ENCODE measurements at regions of chr9 and their contacts with region 1.

Region 1: DNA sequence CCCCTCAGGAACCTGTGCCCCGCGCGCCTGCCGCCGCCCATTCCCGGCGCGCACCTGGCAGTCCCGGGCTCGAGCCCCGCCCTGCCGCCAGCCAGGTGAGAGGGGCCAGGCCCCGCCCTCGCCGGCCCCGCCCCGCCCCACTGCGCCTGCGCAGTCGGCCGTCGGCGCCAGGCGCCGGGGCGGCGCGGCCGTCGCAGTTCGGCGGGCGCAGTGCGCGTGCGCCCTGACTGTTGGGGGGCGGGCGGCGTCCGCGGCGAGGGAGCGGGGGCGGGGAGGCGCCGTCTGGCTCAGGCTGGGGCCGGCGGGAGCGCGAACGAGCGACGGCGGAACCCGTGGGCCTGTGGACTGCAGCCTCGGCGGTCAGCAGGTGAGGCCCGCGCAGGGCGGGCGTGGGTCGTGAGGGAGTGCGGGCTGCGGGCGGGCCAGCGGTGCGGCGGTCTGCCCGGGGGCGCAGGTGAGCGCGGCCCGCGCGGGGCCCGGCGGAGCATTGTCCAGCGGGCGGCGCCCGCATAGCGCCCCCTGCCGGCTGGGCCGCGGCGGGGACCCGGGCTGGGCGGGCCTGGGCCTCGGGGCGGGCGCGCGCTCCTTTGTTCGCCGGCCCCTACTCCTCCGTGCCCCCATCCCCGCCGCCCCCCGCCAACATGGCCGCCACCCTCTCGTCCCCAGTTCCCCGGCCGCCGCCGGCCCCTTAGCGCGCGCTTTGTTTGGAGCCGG is at the start of gene SPIN1:
- DNase-seq: peak; percentile 83 to 93 (median 90)
- H3K4me3 ChIP-seq: peak within 1 kb of the TSS; percentile 76
- H3K27ac ChIP-seq: peak within 1 kb of the TSS; percentile 87 to 98
- H3K4me1 ChIP-seq: peaks cover 16% of the 10 kb centered on the region
- H3K27me3 ChIP-seq: no peaks in the 10 kb centered on the region
- CTCF ChIP-seq: peak in 2 of 3 donors; percentile 54 to 55
- EP300 ChIP-seq: no peak
- POLR2A ChIP-seq: peak; percentile 41
- total RNA-seq, gene SPIN1: 88.5 to 144 (median 131) TPM

Region 2: DNA sequence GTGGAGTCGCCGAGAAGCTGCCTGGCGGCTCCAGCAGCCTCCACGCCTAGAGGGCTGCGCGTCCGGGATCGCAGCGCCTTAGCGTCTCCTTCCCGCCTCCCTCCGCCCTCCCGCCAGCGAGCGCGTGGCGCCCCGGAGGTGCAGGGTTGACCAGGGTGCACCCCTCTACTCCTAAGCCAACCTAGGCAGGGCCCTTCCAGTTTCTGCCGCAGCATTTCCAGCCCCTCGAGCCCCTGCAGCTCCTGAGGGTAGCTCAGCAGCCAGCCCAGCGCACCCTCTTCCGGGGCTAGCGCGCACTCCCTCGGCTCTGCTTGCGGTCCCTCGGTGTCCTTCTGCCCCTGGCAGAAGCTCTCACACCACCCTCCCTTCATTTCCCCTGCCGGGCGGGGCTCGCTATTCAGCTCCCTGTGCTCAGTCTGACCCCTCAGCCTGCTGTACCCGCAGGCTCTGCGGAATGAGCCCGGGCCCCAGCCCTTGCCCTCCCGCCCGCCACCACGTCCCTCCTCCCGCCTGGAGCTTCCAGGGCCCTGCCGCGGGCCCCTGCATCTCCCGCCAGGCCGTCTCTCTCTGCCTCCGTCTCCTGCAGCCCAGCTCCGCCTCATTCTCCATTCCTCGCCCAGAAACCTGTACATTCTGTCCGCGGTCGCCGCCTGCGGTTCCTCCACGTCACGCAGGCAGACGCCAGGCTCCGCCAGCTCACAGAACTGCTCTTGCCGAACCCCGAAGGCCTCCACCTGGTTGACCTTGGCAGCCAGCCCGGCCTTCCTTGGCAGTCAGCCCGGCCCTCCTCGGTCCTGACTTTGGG is 311.8 kb before region 1 on chr9:
- intact Hi-C with region 1: loop called in 1 of 4 experiments (anchors 10 kb)
- DNase-seq: peak; percentile 76 to 92 (median 80)
- H3K4me3 ChIP-seq: peak overlapping the region; percentile 50
- H3K27ac ChIP-seq: peak overlapping the region; percentile 66 to 71
- H3K4me1 ChIP-seq: peaks cover 3% of the 10 kb centered on the region
- H3K27me3 ChIP-seq: no peaks in the 10 kb centered on the region
- CTCF ChIP-seq: peak in 1 of 3 donors; percentile 16
- EP300 ChIP-seq: no peak
- POLR2A ChIP-seq: no peak

Region 3: DNA sequence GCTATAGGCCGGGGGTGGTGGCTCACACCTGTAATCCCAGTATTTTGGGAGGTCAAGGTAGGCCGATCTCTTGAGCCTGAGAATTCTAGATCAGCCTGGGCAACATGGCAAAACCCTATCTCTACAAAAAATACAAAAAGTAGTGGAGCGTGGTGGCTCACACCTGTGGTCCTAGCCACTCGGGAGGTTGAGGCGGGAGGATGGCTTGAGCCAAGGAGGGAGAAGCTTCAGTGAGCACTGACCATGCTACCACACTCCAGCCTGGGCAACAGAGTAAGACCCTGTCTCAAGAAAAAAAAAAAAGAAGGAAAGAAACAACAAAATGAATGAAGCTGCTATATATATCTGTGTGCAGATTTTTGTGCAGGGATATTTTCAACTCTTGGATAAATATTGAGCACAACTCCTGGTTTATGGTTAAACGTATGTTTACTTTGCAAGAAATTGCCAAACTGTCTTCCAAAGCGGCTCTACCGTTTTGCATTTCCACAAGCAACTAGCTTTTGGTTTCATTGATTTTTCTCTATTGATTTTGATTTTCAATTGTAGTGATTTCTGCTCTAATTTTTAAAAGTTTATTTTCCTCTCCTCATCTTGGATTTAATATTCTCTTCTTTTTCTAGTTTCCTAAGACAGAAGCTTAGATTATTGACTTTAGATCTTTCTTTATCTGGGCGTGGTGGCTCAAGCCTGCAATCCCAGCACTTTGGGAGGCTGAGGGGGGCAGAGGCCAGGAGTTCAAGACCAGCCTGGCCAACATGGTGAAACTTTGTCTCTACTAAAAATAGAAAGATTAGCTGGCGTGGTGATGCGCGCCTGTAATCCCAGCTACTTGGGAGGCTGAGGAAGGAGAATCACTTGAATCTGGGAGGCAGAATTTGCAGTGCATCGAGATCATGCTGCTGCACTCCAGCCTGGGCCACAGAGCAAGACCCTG is 49.1 kb after region 1 on chr9:
- intact Hi-C with region 1: loop called in 1 of 4 experiments (anchors 2 kb)
- DNase-seq: no peak
- H3K4me3 ChIP-seq: no peak overlapping the region
- H3K27ac ChIP-seq: no peak overlapping the region
- H3K4me1 ChIP-seq: no peaks in the 10 kb centered on the region
- H3K27me3 ChIP-seq: no peaks in the 10 kb centered on the region
- CTCF ChIP-seq: no peak
- EP300 ChIP-seq: no peak
- POLR2A ChIP-seq: no peak

Region 4: DNA sequence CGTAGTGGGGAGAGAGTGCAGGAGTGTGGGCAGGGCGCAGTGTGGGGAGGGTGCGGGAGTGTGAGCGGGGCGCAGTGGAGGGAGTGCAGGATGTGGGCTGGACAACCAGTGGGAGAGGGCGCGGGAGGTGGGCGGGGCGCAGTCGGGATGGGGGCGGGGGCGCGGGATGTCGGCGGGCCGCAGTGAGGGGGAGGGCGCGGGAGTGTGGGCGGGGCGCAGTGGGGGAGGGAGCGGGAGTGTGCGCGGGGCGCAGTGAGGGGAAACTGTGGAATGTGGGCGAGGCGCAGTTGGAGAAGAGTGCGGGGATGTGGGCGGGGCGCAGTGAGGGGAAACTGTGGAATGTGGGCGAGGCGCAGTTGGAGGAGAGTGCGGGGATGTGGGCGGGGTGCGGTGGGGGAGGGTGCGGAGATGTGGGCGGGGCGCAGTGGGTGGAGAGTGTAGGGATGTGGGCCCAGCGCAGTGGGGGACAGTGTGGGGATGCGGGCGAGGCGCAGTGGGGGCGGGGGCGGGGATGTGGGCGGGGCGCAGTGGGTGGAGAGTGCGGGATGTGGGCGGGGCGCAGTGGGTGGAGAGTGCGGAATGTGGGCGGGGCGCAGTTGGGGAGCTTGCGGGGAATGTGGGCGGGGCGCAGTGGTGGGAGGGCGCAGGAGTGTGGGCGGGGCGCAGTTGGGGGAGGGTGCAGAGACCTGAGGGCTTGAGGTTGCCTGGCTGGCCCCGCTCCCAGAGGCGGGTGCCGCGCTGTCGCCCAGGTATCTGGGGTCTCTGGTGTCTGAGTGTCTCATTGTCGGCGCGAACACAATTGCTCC is 146.3 kb after region 1 on chr9 and contains the start of gene NXNL2:
- intact Hi-C with region 1: loop called in 2 of 4 experiments (anchors 2 to 5 kb)
- DNase-seq: peak; percentile 92 to 96 (median 94)
- H3K4me3 ChIP-seq: peak within 1 kb of the TSS; percentile 46
- H3K27ac ChIP-seq: peak within 1 kb of the TSS; percentile 77 to 83
- H3K4me1 ChIP-seq: peaks cover 10% of the 10 kb centered on the region
- H3K27me3 ChIP-seq: no peaks in the 10 kb centered on the region
- CTCF ChIP-seq: no peak
- EP300 ChIP-seq: no peak
- POLR2A ChIP-seq: no peak
- total RNA-seq, gene NXNL2: 1.9 to 52.4 (median 4.6) TPM

Region 5: GRCh38 chr9:89318123-89319014 is 930.0 kb after region 1 on chr9 and contains the start of gene SECISBP2:
- intact Hi-C with region 1: loop called in 1 of 4 experiments (anchors 10 kb)
- DNase-seq: peak; percentile 95 to 98 (median 97)
- H3K4me3 ChIP-seq: peak within 1 kb of the TSS; percentile 91
- H3K27ac ChIP-seq: peak within 1 kb of the TSS; percentile 99 to 100
- H3K4me1 ChIP-seq: peaks cover 7% of the 10 kb centered on the region
- H3K27me3 ChIP-seq: no peaks in the 10 kb centered on the region
- CTCF ChIP-seq: peak; percentile 49 to 71 (median 62)
- EP300 ChIP-seq: peak; percentile 28
- POLR2A ChIP-seq: peak; percentile 99
- total RNA-seq, gene SECISBP2: 42.8 to 87.6 (median 57.7) TPM

Measured in ovary (tissue), 10 donors.